ENCODE measurements at regions of chr7 and their contacts with region 1.

Region 1: DNA sequence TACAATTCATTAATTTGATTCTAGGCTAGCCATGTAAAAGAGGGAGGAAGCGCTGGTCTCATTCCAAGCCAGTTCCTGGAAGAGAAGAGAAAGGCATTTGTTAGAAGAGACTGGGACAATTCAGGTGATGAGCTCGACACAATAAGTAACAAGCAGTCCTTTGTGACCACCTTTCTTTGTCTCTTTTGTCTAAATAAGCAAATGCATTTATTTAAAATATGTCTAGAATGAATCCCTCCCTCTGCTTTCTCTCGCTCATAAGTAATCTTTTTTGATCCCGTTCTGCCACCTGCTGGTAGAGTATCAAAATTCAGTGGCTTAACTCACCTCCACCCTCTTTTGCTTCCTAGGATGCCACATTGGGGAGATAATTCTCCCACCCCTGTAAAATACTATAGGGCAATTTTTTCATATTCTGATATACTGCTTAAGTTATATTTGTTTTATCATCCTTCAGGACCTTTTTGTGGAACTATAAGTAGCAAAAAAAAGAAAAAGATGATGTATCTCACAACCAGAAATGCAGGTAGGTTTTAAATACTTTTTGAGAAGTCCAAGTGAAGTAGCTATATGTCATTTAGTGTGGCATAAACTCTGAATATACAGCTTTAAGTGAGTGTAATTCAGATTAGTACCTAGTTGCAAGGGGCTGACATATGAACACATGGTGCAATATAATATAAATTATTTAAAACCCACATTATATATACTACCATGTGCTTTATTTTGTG is 91.5 kb downstream of the GSDME start:
- DNase-seq: peak; percentile 68
- ATAC-seq: peak; percentile 39
- H3K4me3 ChIP-seq: no peak overlapping the region
- H3K4me3 Mint-ChIP-seq: no peak overlapping the region
- H3K27ac ChIP-seq: no peak overlapping the region
- H3K27ac Mint-ChIP-seq: no peak overlapping the region
- H3K4me1 ChIP-seq: no peaks in the 10 kb centered on the region
- H3K4me1 Mint-ChIP-seq: no peaks in the 10 kb centered on the region
- H3K27me3 ChIP-seq: no peaks in the 10 kb centered on the region
- H3K27me3 Mint-ChIP-seq: no peaks in the 10 kb centered on the region
- CTCF ChIP-seq: peak; percentile 94

Region 2: DNA sequence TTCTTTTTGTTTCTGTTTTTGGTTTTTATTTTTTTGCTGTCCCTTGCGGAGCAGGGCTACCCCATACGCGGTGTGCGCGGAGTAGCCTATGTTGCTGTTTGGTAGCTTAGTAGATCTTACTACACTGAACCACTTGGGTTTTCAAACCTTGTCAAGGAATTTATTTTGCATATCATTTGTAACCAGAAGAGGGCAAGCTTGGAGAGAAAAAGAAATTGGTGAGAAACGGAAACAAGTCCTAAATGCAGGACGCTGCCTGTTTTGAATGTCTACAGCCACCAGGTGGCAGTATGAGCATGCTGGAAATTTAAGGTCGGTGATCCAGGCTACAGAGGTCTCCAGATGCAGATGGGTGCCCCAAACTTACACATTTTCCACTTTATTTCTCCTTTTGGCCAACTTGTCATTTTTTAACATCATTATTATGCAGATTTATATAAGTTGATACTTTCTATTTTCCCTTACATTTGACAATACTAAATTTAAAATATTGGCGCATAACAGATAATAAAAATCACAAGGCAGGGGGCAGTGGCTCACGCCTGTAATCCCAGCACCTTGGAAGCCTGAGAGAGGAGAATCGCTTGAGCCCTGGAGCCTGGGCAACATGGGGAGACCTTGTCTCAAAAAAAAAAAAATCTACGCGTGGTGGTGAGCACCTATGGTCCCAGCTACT is 1118.7 kb before region 1 on chr7:
- CTCF ChIA-PET with region 1: interaction called, 8 read pairs
- POLR2A ChIA-PET with region 1: no interaction called
- intact Hi-C with region 1: loop called (anchors 10 kb)
- DNase-seq: peak; percentile 90
- ATAC-seq: peak; percentile 91
- H3K4me3 ChIP-seq: peak overlapping the region in 1 of 5 experiments; percentile 18
- H3K4me3 Mint-ChIP-seq: no peak overlapping the region
- H3K27ac ChIP-seq: no peak overlapping the region
- H3K27ac Mint-ChIP-seq: no peak overlapping the region
- H3K4me1 ChIP-seq: peaks cover 8 to 13% of the 10 kb centered on the region in 2 donors
- H3K4me1 Mint-ChIP-seq: peaks cover 15% of the 10 kb centered on the region
- H3K27me3 ChIP-seq: no peaks in the 10 kb centered on the region
- H3K27me3 Mint-ChIP-seq: no peaks in the 10 kb centered on the region
- CTCF ChIP-seq: peak; percentile 98

Region 3: GRCh38 chr7:23696916-23697441 is 968.8 kb before region 1 on chr7:
- CTCF ChIA-PET with region 1: interaction called, 5 read pairs
- POLR2A ChIA-PET with region 1: no interaction called
- intact Hi-C with region 1: loop called (anchors 5 kb)
- DNase-seq: peak; percentile 67
- ATAC-seq: peak; percentile 45
- H3K4me3 ChIP-seq: no peak overlapping the region
- H3K4me3 Mint-ChIP-seq: no peak overlapping the region
- H3K27ac ChIP-seq: no peak overlapping the region
- H3K27ac Mint-ChIP-seq: no peak overlapping the region
- H3K4me1 ChIP-seq: no peaks in the 10 kb centered on the region
- H3K4me1 Mint-ChIP-seq: peaks cover 2% of the 10 kb centered on the region
- H3K27me3 ChIP-seq: no peaks in the 10 kb centered on the region
- H3K27me3 Mint-ChIP-seq: no peaks in the 10 kb centered on the region
- CTCF ChIP-seq: peak; percentile 85

Region 4: DNA sequence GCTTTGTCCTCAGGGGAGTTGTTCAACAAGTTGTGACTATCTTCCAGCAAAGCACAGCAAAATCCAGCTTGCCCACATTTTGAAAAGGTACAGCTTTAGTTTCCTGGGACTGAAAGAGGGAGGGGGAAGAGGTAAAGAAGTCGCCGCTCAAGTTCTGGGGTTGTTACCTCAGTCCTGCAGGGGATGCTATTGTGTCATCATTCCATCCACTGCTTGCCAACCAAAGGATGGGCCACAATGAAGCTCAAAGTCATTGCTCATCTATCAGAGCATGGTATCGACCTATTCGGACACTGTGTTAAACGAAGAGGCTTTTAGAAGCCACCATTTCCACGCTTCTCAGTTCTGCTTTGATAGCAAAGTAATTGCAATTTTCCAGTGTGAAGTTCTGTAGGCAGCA is 347.4 kb before region 1 on chr7:
- CTCF ChIA-PET with region 1: interaction called, 20 read pairs
- POLR2A ChIA-PET with region 1: no interaction called
- intact Hi-C with region 1: no loop called
- DNase-seq: peak; percentile 25
- ATAC-seq: no peak
- H3K4me3 ChIP-seq: no peak overlapping the region
- H3K4me3 Mint-ChIP-seq: no peak overlapping the region
- H3K27ac ChIP-seq: no peak overlapping the region
- H3K27ac Mint-ChIP-seq: no peak overlapping the region
- H3K4me1 ChIP-seq: no peaks in the 10 kb centered on the region
- H3K4me1 Mint-ChIP-seq: no peaks in the 10 kb centered on the region
- H3K27me3 ChIP-seq: no peaks in the 10 kb centered on the region
- H3K27me3 Mint-ChIP-seq: peaks cover 16% of the 10 kb centered on the region
- CTCF ChIP-seq: no peak

Region 5: DNA sequence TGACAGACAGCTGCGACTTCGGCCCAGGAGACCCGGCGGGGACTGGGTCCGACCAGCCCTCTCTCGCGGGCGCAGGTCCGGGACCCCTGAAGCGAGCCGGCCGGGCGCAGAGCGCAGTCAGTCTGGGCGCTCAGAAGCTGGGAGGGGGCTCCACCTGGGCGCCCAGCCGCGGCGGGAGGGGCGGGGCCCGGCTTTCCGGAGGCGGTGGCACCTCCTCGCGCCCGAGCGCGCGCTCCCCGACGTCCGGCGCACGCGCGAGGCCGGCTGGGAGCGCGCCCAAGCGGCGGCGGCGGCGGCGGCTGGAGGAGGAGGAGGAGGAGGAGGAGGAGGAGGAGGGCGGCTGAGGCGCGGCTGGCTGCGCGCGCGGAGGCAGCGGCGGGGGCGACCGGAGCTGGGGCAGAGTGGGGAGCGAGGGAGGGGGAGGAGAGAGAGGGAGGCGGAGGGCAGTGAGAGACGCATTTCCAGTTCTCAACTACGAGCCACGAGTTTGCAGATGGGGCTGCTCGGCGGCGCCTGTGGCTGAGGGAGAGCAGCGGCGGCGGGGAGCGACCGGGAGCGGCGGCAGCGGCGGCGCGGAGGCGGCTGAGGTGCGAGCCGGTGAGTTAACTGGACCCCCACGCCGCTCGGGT is 92.6 kb before region 1 on chr7 and contains the start of gene PALS2:
- CTCF ChIA-PET with region 1: interaction called, 45 read pairs
- POLR2A ChIA-PET with region 1: no interaction called
- intact Hi-C with region 1: loop called (anchors 1 kb)
- DNase-seq: peak; percentile 90
- ATAC-seq: peak; percentile 79
- H3K4me3 ChIP-seq: peak within 1 kb of the TSS; percentile 63 to 88 (median 84)
- H3K4me3 Mint-ChIP-seq: peak within 1 kb of the TSS; percentile 91
- H3K27ac ChIP-seq: peak within 1 kb of the TSS; percentile 70 to 73
- H3K27ac Mint-ChIP-seq: peak within 1 kb of the TSS; percentile 89
- H3K4me1 ChIP-seq: peaks cover 24 to 29% of the 10 kb centered on the region in 2 donors
- H3K4me1 Mint-ChIP-seq: peaks cover 37% of the 10 kb centered on the region
- H3K27me3 ChIP-seq: peaks cover 0 to 3% (median 0%) of the 10 kb centered on the region in 4 experiments
- H3K27me3 Mint-ChIP-seq: peaks cover 5% of the 10 kb centered on the region
- CTCF ChIP-seq: no peak
- total RNA-seq, gene PALS2: 47.8 and 54.2 TPM in 2 replicates

Measured in B cell (primary cell).